Dendritic cell treated with granulocyte-macrophage colony-stimulating factor and Interleukin-4, amounts not matched to agents 40 ng/mL and 50 ng/mL, for 4 days (primary cell): ENCODE measurements at regions of chr11 and their contacts with region 1.

Region 1: DNA sequence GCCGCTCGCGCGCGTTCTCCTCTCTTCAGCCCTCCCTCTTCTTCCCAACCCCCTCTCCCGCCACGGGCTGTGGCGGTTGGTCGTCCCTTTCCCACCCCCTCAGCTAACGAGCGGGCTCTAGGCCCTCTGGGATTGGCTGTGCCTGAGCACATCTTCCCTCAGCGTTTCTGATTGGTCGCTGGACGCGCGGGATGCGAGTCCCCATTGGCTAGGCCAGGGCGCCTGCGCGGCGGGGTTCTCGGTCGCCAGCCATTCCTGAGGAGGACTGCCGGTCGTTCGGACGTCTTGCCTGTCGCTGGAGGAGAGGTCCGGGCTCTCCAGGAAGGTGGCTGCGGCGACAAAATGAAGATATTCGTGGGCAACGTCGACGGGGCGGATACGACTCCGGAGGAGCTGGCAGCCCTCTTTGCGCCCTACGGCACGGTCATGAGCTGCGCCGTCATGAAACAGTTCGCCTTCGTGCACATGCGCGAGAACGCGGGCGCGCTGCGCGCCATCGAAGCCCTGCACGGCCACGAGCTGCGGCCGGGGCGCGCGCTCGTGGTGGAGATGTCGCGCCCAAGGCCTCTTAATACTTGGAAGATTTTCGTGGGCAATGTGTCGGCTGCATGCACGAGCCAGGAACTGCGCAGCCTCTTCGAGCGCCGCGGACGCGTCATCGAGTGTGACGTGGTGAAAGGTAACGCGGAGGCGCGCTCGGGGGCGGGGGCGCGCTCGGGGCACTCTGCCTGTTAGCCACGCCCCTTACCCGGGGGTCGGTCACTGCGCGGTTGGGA is at the start of gene RBM14:
- H3K4me3 Mint-ChIP-seq: peak within 1 kb of the TSS; percentile 99
- H3K27ac Mint-ChIP-seq: peak within 1 kb of the TSS; percentile 100
- H3K4me1 Mint-ChIP-seq: peaks cover 36% of the 10 kb centered on the region
- H3K27me3 Mint-ChIP-seq: no peaks in the 10 kb centered on the region

Region 2: DNA sequence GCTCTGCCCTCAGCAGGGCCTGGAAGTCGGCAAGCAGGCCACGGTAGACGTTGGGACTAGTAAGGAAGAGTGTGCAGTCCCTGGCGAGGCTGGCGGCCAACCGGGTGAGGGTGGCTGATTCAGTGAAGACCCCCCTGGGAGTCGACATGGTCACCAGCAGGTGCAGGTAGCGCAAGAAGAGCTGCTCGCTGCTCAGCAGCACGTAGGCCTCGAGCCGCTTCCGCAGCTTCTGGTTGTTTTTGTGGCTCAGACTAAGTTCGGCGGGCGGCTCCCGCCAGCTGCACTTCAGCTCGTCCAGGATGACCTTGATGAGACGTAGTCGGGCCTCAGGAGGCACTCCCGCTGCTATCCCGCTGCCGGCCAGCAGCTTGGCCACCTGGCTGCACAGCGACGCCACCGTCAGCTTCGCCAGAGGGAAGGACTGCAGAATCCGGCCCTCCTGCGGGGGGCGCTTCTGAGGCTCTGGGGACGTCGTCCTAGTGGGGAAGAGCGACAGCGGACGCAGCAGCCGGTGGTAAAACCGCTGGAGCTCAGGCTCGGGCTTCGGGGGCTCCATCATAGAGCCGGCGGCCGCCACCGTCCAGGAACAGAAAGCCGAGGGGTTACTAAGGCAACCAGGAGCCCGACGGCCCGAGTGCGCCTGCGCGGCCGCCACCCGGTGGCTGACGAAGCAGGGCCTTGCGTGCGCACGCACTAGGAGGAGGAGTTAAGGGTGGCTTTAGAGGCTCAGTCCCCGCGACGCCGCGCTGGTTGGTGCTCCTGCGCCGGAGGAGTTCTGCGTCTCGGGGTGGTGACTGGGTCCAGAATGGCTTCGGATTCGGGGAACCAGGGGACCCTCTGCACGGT is 23.9 kb before region 1 on chr11 and contains the starts of genes CCDC87 and CCS:
- intact Hi-C with region 1: loop called (anchors 2 kb)
- H3K4me3 Mint-ChIP-seq: peak within 1 kb of the TSS; percentile 98
- H3K27ac Mint-ChIP-seq: peak within 1 kb of the TSS; percentile 91
- H3K4me1 Mint-ChIP-seq: peaks cover 32% of the 10 kb centered on the region
- H3K27me3 Mint-ChIP-seq: peaks cover 3% of the 10 kb centered on the region